ENCODE measurements at regions of chr3 and their contacts with region 1.

Region 1: GRCh38 chr3:193572426-193572908 is 17.8 kb upstream of the ATP13A4 start:
- DNase-seq: peak; percentile 26
- H3K4me3 Mint-ChIP-seq: no peak overlapping the region
- H3K27ac Mint-ChIP-seq: no peak overlapping the region
- H3K4me1 Mint-ChIP-seq: peaks cover 4% of the 10 kb centered on the region
- H3K27me3 Mint-ChIP-seq: peaks cover 6% of the 10 kb centered on the region

Region 2: GRCh38 chr3:192467230-192468140 is 1105.0 kb before region 1 on chr3:
- intact Hi-C with region 1: loop called (anchors 1 kb)
- DNase-seq: peak; percentile 32
- H3K4me3 Mint-ChIP-seq: no peak overlapping the region
- H3K27ac Mint-ChIP-seq: no peak overlapping the region
- H3K4me1 Mint-ChIP-seq: no peaks in the 10 kb centered on the region
- H3K27me3 Mint-ChIP-seq: peaks cover 15% of the 10 kb centered on the region

Region 3: DNA sequence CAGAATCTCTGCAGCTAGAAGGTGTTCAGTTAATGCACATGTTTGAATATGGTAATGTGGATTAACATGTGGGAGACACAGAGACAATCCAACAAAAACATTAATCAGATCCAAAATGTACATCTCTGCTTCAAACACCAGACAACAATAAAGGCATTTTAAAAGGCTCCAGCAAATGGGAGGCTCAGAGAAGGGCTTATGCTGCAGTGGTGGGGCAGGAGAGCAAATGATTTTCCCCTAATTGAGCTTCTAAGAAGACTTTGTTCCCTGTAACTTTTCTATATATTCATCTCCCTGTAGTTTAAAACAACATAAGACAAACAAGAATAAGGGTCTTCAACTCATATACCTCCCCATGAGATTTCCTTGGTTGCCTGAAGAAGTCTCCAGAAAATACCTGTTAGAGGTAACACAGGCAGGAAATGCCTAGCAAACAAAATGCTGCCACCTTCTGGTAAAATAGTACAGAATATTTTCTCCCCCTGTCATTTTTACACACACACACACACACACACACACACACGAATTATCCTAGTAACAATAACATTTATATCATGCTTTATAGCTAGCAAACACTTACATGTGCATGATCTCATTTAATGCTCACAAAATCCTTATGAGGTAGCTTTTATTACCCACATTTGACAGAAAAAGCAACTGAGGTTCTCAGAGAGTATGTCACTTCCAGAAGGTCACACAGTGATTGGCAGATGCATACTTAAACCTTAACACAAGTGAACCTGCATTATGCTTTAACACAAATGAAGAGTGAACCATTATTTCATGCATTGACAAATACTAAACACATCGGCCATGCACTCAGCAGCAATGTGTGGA is 531.4 kb before region 1 on chr3:
- intact Hi-C with region 1: loop called (anchors 1 kb)
- DNase-seq: no peak
- H3K4me3 Mint-ChIP-seq: no peak overlapping the region
- H3K27ac Mint-ChIP-seq: no peak overlapping the region
- H3K4me1 Mint-ChIP-seq: peaks cover 10% of the 10 kb centered on the region
- H3K27me3 Mint-ChIP-seq: peaks cover 8% of the 10 kb centered on the region

Region 4: GRCh38 chr3:193465992-193466608 is 106.4 kb before region 1 on chr3:
- intact Hi-C with region 1: loop called (anchors 1 kb)
- DNase-seq: no peak
- H3K4me3 Mint-ChIP-seq: no peak overlapping the region
- H3K27ac Mint-ChIP-seq: no peak overlapping the region
- H3K4me1 Mint-ChIP-seq: no peaks in the 10 kb centered on the region
- H3K27me3 Mint-ChIP-seq: no peaks in the 10 kb centered on the region

Region 5: DNA sequence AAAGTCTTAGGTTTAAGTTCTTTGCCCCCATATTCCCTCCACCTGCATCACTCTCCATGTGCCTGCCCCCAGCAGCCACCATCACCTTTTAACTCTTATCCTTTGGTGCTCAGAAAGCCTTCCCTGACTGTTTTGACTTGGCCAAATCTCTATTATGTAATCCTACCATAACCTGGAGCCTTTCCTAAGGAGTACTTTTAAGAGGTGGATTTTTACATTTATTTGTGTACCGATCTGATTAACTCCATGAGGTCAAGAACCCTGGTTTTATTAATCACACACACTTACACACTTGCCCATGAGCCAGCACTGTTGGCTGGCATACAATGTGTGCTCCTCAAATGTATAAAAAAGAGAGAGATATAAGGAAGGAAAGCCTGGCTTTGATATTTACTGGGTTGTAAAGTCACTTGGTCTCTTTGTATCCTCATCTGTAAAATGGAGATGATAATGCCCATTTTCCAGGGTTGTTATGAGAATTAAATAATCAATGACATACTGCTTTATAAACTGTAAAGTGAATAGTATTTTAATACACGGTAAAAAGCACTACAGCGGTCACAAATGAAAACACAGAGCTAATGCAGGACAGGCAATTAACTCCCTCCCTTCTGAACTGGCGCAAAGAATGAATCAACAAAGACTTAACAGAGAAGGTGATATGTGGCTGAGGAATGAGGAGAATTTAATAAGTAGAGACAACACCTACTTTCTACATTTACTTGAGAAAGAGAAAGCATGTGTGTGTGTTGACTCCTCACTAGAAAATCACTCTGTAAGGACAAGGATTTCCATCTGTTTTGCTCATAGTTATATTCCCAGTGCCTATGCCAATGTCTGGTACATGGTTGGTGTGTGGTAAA is 63.1 kb before region 1 on chr3:
- intact Hi-C with region 1: no loop called
- DNase-seq: no peak
- H3K4me3 Mint-ChIP-seq: no peak overlapping the region
- H3K27ac Mint-ChIP-seq: no peak overlapping the region
- H3K4me1 Mint-ChIP-seq: no peaks in the 10 kb centered on the region
- H3K27me3 Mint-ChIP-seq: peaks cover 3% of the 10 kb centered on the region

Region 6: GRCh38 chr3:193630005-193630404 is 57.5 kb after region 1 on chr3:
- intact Hi-C with region 1: no loop called
- DNase-seq: no peak
- H3K4me3 Mint-ChIP-seq: no peak overlapping the region
- H3K27ac Mint-ChIP-seq: no peak overlapping the region
- H3K4me1 Mint-ChIP-seq: no peaks in the 10 kb centered on the region
- H3K27me3 Mint-ChIP-seq: no peaks in the 10 kb centered on the region